Left colon (tissue), 2 donors: ENCODE measurements at regions of chr14 and their contacts with region 1.

Region 1: GRCh38 chr14:23379366-23380196 is 2.7 kb downstream of the CMTM5 start:
- DNase-seq: peak; percentile 54 to 75
- ATAC-seq: peak; percentile 94

Region 2: GRCh38 chr14:23269193-23269592 is 110.4 kb before region 1 on chr14:
- intact Hi-C with region 1: loop called in 1 of 2 experiments (anchors 10 kb)
- DNase-seq: no peak
- ATAC-seq: no peak

Region 3: DNA sequence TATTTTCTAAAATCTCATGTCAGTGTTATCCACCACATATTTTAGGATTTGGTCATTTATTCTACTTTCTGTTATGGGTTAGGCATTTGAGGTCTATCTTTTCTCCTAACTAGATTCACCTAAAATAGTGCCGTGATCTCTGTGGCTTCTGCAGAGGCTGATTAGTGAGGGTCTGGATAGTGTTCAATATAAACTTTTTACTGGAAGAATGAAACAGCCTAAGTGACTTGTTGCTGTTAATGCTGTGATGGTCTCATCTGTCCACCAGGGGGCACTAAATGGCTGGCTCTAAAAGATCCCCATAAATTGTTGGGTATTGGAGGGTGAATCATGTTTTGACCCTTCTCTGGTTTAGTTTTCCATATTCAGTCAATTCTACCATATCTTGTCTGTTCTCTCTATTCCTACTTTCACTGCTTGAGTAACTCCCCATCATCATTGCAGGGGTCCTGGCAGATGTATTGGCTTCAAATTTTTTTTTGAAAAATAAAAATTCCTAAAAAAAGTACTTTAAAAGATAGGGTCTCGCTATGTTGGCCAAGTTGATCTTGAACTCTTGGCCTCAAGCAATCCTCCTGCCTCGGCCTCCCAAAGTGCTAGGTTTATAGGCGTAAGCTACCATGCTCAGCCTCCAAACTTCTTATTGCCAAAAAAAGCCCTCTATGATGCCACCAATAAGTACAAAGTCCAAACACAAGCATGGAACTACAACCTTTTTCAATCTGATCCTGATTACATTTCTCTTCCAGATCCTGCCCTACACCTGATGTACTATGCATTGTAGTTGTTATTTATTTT is 51.4 kb before region 1 on chr14:
- intact Hi-C with region 1: loop called in 1 of 2 experiments (anchors 2 kb)
- DNase-seq: peak; percentile 54 to 72
- ATAC-seq: peak; percentile 76

Region 4: GRCh38 chr14:23446291-23446851 is 66.8 kb after region 1 on chr14:
- intact Hi-C with region 1: no loop called
- DNase-seq: peak; percentile 44 to 58
- ATAC-seq: peak; percentile 58